ENCODE measurements at regions of chrX and their contacts with region 1.

Region 1: GRCh38 chrX:118807151-118808017 is 16.2 kb upstream of the ZCCHC12 start:
- DNase-seq: no peak
- ATAC-seq: peak; percentile 45

Region 2: DNA sequence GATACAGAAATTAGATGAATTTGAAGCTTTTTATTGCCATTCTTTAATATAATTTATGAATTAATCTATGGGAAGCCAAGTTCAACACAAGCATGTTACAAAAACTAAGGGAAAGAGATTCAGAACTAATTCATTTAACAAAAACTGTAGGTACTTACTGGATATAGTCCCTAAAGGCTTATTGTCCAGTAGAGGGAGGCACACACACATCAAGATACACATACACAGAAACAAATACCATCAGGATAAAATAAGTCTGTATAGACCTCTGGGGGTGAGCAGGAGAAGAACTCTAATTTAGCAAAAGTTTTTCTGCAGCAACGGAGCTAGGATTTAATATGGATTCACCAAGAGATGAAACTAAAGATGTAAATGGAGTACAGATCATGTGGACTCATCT is 163.0 kb before region 1 on chrX:
- intact Hi-C with region 1: loop called (anchors 10 kb)
- DNase-seq: no peak
- ATAC-seq: no peak